ENCODE measurements at regions of chr6 and their contacts with region 1.

Region 1: DNA sequence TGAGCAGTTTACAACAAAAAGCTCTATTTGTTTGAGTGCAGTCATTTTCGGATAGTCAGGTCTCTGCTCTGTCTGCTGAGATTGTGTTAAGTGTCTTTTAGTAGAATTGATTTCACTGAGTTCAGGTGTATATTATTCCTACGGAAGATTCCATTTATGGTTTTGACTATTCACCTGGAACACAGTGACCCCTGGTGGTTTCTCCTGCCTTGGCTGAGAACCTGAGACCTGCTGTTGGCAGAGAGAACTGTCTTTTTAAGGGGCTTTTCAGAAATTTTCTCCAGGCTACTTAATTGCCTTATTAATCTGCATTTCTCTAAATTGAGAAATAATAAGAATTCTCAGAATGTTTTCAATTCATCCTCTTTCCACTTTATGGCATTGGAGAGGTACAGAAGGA is 508.0 kb downstream of the TBC1D32 start:
- DNase-seq: peak; percentile 61
- H3K4me3 Mint-ChIP-seq: no peak overlapping the region
- H3K27ac Mint-ChIP-seq: no peak overlapping the region
- H3K4me1 Mint-ChIP-seq: no peaks in the 10 kb centered on the region
- H3K27me3 Mint-ChIP-seq: no peaks in the 10 kb centered on the region
- CTCF ChIP-seq: peak; percentile 54

Region 2: DNA sequence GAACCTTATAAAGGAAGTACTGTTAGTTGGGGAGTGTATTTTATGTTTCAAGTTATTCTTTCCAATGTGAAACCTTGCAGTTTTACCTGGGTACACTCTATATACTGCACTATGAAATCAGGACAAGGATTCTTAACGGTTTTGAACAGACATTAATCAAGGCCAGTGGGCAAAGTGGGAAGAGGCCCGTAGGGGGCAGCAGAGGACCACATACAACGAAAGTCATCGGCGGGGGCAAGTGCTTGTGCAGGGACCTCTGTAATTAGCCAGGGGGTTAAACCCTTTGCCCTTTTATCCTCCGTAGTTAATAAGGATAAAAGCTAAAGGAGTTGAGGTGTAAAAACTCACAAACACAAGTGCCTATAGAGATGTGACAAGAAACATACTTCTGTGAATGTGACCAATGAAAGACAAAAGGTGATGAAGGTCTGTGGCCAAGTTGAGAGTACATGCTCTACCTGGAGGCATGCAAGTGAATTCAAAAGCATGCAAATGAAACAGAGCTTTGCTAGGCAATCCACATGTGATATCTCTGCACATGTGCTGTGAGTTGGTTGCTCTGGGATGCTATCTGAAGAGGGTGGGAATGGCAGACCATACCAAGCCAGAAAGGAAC is 1084.0 kb before region 1 on chr6:
- CTCF ChIA-PET with region 1: interaction called, 11 read pairs
- POLR2A ChIA-PET with region 1: no interaction called
- intact Hi-C with region 1: loop called (anchors 1 kb)
- DNase-seq: peak; percentile 63
- H3K4me3 Mint-ChIP-seq: no peak overlapping the region
- H3K27ac Mint-ChIP-seq: no peak overlapping the region
- H3K4me1 Mint-ChIP-seq: no peaks in the 10 kb centered on the region
- H3K27me3 Mint-ChIP-seq: no peaks in the 10 kb centered on the region
- CTCF ChIP-seq: peak; percentile 80

Region 3: GRCh38 chr6:120378582-120379220 is 447.6 kb before region 1 on chr6:
- CTCF ChIA-PET with region 1: interaction called, 3 read pairs
- POLR2A ChIA-PET with region 1: no interaction called
- intact Hi-C with region 1: loop called (anchors 2 kb)
- DNase-seq: peak; percentile 61
- H3K4me3 Mint-ChIP-seq: no peak overlapping the region
- H3K27ac Mint-ChIP-seq: no peak overlapping the region
- H3K4me1 Mint-ChIP-seq: no peaks in the 10 kb centered on the region
- H3K27me3 Mint-ChIP-seq: peaks cover 1% of the 10 kb centered on the region
- CTCF ChIP-seq: peak; percentile 50

Region 4: DNA sequence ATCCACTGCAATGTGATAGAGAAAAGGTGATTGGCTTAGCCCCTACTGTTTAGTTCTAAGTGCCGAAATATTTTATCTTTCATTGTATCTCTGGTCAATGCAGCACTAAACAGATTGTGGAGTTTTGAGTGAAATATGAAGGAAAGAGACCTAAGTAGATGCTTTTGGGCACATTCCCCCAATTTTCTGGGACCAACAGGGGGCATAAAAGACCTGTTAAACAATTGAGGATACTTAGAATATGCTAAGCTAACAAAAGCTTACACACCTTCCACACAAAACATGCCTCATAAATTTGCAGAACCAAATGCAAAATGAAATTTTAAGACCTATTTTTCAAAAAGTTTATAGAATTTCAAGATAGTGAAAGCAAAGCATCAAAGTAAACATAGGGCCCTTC is 238.9 kb before region 1 on chr6:
- CTCF ChIA-PET with region 1: no interaction called
- POLR2A ChIA-PET with region 1: no interaction called
- intact Hi-C with region 1: loop called (anchors 5 kb)
- DNase-seq: no peak
- H3K4me3 Mint-ChIP-seq: no peak overlapping the region
- H3K27ac Mint-ChIP-seq: no peak overlapping the region
- H3K4me1 Mint-ChIP-seq: no peaks in the 10 kb centered on the region
- H3K27me3 Mint-ChIP-seq: peaks cover 8% of the 10 kb centered on the region
- CTCF ChIP-seq: no peak

Region 5: DNA sequence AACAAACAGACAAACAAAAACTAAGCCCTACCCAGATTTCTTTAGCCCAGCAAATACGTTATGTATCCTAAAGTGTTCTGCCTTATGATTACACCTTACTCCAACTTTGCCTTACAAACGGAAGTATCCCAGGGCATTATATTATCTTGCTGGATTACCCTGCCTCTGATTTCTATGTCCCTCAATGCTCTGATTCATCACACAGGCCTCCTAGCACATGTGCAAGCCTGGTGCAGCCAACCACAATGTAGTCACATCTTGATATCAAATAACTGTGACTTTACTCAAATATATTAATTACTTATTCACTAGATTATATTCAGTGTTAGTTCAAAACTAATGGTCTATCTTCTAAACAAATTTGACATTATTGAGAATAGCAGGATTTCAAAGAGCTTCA is 90.6 kb before region 1 on chr6:
- CTCF ChIA-PET with region 1: no interaction called
- POLR2A ChIA-PET with region 1: no interaction called
- intact Hi-C with region 1: no loop called
- DNase-seq: no peak
- H3K4me3 Mint-ChIP-seq: no peak overlapping the region
- H3K27ac Mint-ChIP-seq: no peak overlapping the region
- H3K4me1 Mint-ChIP-seq: peaks cover 10% of the 10 kb centered on the region
- H3K27me3 Mint-ChIP-seq: no peaks in the 10 kb centered on the region
- CTCF ChIP-seq: no peak